Natural killer cell (primary cell): ENCODE measurements at regions of chr16 and their contacts with region 1.

Region 1: DNA sequence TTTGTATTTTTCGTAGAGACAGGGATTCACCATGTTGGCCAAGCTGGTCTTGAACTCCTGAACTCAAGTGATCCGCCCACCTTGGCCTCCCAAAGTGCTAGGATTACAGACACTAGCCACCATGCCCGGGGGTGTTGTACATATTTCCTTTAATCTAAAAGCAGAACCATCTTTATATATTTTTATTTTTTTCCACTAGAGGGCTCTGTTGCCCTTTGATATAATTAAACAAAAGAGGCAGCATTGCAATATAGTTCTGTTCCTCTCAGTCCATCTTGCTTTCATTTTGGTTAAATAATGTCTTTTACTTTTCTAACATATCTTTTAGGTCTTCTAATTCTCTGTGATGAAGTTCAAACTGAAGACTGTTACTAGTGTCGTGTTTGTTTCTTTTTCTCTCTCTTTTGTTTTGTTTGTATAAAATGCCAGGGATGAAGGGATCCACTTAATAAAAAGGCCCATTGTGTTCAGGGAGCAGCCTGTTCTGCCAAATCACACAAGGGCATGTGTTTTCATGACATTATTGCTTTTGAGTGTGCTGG is 23.4 kb downstream of the WWOX start:
- DNase-seq: peak in 1 of 2 donors; percentile 66
- ATAC-seq: peak; percentile 79 to 91 (median 89)
- H3K4me3 ChIP-seq: no peak overlapping the region
- H3K4me3 Mint-ChIP-seq: no peak overlapping the region
- H3K27ac ChIP-seq: no peak overlapping the region
- H3K27ac Mint-ChIP-seq: peak overlapping the region; percentile 8 to 17
- H3K4me1 ChIP-seq: no peaks in the 10 kb centered on the region
- H3K4me1 Mint-ChIP-seq: peaks cover 5% of the 10 kb centered on the region in 2 donors
- H3K27me3 ChIP-seq: no peaks in the 10 kb centered on the region
- H3K27me3 Mint-ChIP-seq: no peaks in the 10 kb centered on the region
- CTCF ChIP-seq: peak; percentile 73

Region 2: GRCh38 chr16:78177987-78178386 is 55.1 kb after region 1 on chr16:
- intact Hi-C with region 1: no loop called
- DNase-seq: no peak
- ATAC-seq: peak; percentile 35 to 59 (median 35)
- H3K4me3 ChIP-seq: no peak overlapping the region
- H3K4me3 Mint-ChIP-seq: no peak overlapping the region
- H3K27ac ChIP-seq: no peak overlapping the region
- H3K27ac Mint-ChIP-seq: peak overlapping the region in 1 of 2 donors; percentile 63
- H3K4me1 ChIP-seq: no peaks in the 10 kb centered on the region
- H3K4me1 Mint-ChIP-seq: peaks cover 14 to 25% of the 10 kb centered on the region in 2 donors
- H3K27me3 ChIP-seq: no peaks in the 10 kb centered on the region
- H3K27me3 Mint-ChIP-seq: no peaks in the 10 kb centered on the region
- CTCF ChIP-seq: no peak

Region 3: DNA sequence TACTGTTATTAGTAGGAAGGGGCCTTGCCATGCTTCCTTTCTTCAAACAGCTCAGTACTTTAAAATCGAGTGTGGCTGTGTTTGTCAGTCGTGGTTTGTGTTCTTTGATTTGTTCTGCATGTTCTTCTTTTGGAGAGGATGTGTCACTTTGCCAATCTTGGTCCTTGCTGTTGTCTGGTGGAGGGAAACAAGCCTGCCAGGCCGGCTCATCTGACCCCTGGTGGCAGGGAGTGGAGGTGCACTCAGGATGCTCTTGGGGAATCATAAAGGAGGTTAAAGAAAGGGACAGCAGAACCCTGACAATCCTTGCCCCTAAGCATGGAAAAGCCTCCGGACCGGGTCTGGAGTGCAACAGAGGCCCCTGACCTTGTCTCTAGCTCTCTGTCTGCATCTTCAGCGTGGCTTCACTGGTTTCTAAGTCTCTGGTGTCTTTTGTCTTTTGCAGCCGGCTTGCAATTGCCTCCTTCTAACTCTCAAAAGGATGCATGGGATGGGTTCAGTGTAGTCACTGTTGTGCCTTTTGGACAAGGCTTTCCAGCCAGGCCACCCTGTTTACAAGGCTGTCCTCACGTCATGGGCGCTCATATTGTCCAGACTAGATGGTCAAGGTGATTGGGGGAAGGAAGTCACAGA is 112.4 kb after region 1 on chr16:
- intact Hi-C with region 1: loop called (anchors 1 kb)
- DNase-seq: peak; percentile 66 to 74
- ATAC-seq: peak; percentile 84 to 88 (median 88)
- H3K4me3 ChIP-seq: no peak overlapping the region
- H3K4me3 Mint-ChIP-seq: no peak overlapping the region
- H3K27ac ChIP-seq: no peak overlapping the region
- H3K27ac Mint-ChIP-seq: no peak overlapping the region
- H3K4me1 ChIP-seq: no peaks in the 10 kb centered on the region
- H3K4me1 Mint-ChIP-seq: peaks cover 6% of the 10 kb centered on the region in 2 donors
- H3K27me3 ChIP-seq: no peaks in the 10 kb centered on the region
- H3K27me3 Mint-ChIP-seq: no peaks in the 10 kb centered on the region
- CTCF ChIP-seq: peak; percentile 93

Region 4: DNA sequence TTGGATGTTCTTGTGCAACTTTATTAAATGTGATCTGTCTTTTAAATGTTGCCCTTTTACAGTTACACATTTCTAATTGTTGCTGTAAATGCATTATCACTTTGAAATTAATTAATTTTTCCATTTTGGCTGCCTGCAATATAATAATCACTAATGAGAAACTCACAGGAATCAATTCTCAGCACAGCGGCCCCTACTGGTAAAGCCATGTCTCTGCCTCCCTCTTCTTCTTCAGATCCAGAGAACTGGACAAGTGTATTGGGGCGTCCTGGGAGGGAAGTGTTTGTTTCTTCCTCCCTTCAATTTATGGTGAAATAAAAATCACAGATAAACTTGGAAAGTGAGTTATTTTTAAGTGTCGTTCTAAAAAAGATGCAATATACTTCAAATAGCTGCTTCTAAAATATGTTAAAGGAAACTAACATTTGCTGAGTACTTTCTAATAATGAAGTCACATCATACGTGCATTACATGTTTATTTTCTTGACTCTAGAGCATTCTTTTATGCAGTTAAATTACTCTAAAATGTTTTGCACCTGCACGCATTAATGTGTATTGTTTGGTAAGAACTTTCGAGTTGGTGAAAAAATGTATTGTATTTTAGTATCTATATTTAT is 314.6 kb after region 1 on chr16:
- intact Hi-C with region 1: loop called (anchors 2 kb)
- DNase-seq: peak in 1 of 2 donors; percentile 55
- ATAC-seq: peak in 1 of 3 donors; percentile 54
- H3K4me3 ChIP-seq: no peak overlapping the region
- H3K4me3 Mint-ChIP-seq: no peak overlapping the region
- H3K27ac ChIP-seq: no peak overlapping the region
- H3K27ac Mint-ChIP-seq: no peak overlapping the region
- H3K4me1 ChIP-seq: no peaks in the 10 kb centered on the region
- H3K4me1 Mint-ChIP-seq: no peaks in the 10 kb centered on the region
- H3K27me3 ChIP-seq: no peaks in the 10 kb centered on the region
- H3K27me3 Mint-ChIP-seq: no peaks in the 10 kb centered on the region
- CTCF ChIP-seq: peak; percentile 92

Region 5: DNA sequence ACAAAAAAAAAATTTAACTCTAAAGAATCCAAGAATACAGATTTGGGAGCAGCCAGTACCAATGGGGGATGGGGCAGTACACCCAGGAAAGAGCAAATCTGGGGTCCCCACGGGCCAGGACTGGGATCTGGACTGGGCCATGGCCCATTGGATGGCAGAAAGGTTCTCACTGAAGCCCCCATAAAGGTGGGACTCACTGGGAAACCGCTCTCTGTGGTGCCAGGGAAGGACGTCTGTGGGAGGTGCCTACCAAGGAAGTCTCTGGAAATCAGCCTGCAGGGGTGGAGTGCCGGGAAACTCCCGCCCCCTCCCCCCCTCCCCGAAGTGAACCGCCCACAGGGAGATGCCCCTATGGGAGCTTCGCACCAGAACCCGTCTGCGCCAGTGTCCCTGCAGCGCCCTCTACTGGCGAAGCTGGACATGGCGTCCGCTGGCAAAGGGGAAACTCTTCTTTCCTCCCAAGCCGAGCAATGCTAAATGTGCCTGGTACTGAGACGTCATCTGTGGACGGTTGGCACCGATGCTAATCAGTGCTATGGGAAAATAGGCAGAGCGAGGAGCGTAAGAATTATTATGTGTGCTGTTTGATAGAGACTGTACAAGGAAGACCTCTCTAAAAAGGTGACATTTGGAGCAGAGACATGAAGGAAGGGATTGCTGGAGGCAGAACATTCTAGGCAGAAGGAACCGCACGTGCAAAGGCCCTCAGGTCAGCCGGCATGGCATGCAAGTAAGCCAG is 647.7 kb after region 1 on chr16:
- intact Hi-C with region 1: loop called (anchors 5 kb)
- DNase-seq: peak; percentile 80 to 90
- ATAC-seq: peak; percentile 85 to 98 (median 97)
- H3K4me3 ChIP-seq: no peak overlapping the region
- H3K4me3 Mint-ChIP-seq: no peak overlapping the region
- H3K27ac ChIP-seq: no peak overlapping the region
- H3K27ac Mint-ChIP-seq: no peak overlapping the region
- H3K4me1 ChIP-seq: peaks cover 23% of the 10 kb centered on the region
- H3K4me1 Mint-ChIP-seq: peaks cover 15 to 22% of the 10 kb centered on the region in 2 donors
- H3K27me3 ChIP-seq: no peaks in the 10 kb centered on the region
- H3K27me3 Mint-ChIP-seq: peaks cover 28 to 46% of the 10 kb centered on the region in 2 donors
- CTCF ChIP-seq: peak; percentile 97

Region 6: GRCh38 chr16:78823027-78823426 is 700.2 kb after region 1 on chr16:
- intact Hi-C with region 1: no loop called
- DNase-seq: no peak
- ATAC-seq: no peak
- H3K4me3 ChIP-seq: no peak overlapping the region
- H3K4me3 Mint-ChIP-seq: no peak overlapping the region
- H3K27ac ChIP-seq: no peak overlapping the region
- H3K27ac Mint-ChIP-seq: no peak overlapping the region
- H3K4me1 ChIP-seq: no peaks in the 10 kb centered on the region
- H3K4me1 Mint-ChIP-seq: no peaks in the 10 kb centered on the region
- H3K27me3 ChIP-seq: no peaks in the 10 kb centered on the region
- H3K27me3 Mint-ChIP-seq: no peaks in the 10 kb centered on the region
- CTCF ChIP-seq: no peak